ENCODE measurements at regions of chr1 and their contacts with region 1.

Region 1: DNA sequence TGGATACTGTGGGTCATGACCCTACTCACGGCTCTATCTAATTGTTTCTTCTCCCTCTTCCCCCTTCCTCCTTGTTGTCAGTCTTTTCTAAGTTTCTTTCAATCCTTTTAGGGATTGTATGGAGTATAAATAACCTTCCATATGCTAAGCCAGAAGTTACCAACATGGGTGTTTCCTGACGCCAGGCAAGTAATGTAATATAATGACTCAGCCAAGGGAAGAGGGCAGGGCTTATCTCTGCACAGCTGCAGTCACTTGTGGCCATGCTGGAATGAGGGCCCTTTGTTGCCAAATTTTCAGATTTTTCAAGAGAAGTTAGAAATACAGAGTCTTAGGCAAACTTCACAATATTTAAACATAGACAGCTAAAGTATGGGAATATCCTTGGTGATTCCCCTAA is 194.6 kb downstream of the ST6GALNAC3 start:
- DNase-seq: peak in 2 of 14 experiments; percentile 40 to 44
- ATAC-seq: peak; percentile 25
- H3K4me3 ChIP-seq: no peak overlapping the region
- H3K4me3 Mint-ChIP-seq: peak overlapping the region; percentile 50
- H3K27ac ChIP-seq: no peak overlapping the region
- H3K27ac Mint-ChIP-seq: peak overlapping the region; percentile 77
- H3K4me1 ChIP-seq: peaks cover 40% of the 10 kb centered on the region
- H3K4me1 Mint-ChIP-seq: peaks cover 70% of the 10 kb centered on the region
- H3K27me3 ChIP-seq: no peaks in the 10 kb centered on the region
- H3K27me3 Mint-ChIP-seq: no peaks in the 10 kb centered on the region
- CTCF ChIP-seq: no peak

Region 2: DNA sequence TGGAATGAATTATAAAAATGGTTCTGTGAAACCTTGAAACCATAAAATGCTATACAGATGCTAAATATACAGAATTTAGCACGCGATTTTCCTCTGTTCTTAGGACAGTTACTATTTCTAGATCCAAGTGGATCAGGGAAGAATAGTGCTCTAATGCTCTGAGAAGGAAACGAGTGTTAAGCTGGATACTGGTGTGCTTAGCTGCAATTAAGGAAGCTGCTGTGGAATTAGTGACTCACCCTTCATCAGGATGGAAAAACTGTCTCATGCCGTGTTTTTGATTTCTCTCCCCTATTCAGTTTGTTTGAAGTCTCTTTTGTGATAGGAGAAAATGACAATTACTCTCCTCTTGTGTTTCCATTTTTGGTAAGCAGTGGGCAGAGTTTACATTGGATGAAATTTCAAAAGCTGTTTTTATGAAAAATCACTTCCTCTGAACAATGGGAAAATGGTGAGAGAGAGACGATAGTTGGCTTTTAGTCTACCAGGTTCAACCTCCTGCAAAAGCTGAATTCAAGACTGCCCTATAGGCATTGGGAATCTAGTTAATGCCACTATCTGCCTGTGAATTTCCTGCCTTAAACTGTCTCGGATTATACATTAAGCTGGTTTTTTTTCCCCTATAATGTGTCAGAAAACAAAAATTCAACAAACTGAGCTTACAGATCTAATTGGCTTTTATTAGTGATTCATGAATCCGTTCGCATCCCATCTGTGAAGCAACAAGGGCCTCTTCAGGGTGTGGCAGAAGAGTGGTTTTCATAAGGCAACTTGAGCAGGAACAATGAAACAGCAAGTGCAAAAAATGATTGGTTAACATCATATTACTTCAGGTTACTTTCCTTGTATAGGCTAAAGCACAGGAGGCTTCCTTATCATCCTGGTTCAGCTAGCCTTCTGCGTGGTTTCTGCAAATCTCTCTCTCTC is 14.8 kb before region 1 on chr1:
- CTCF ChIA-PET with region 1: no interaction called
- POLR2A ChIA-PET with region 1: interaction called, 10 read pairs
- intact Hi-C with region 1: no loop called
- DNase-seq: no peak
- ATAC-seq: no peak
- H3K4me3 ChIP-seq: no peak overlapping the region
- H3K4me3 Mint-ChIP-seq: no peak overlapping the region
- H3K27ac ChIP-seq: no peak overlapping the region
- H3K27ac Mint-ChIP-seq: no peak overlapping the region
- H3K4me1 ChIP-seq: no peaks in the 10 kb centered on the region
- H3K4me1 Mint-ChIP-seq: peaks cover 55% of the 10 kb centered on the region
- H3K27me3 ChIP-seq: no peaks in the 10 kb centered on the region
- H3K27me3 Mint-ChIP-seq: no peaks in the 10 kb centered on the region
- CTCF ChIP-seq: no peak

Region 3: GRCh38 chr1:76281306-76281705 is 12.2 kb after region 1 on chr1:
- CTCF ChIA-PET with region 1: no interaction called
- POLR2A ChIA-PET with region 1: interaction called, 3 read pairs
- intact Hi-C with region 1: loop called in 1 of 2 experiments (anchors 2 kb)
- DNase-seq: no peak
- ATAC-seq: no peak
- H3K4me3 ChIP-seq: no peak overlapping the region
- H3K4me3 Mint-ChIP-seq: no peak overlapping the region
- H3K27ac ChIP-seq: no peak overlapping the region
- H3K27ac Mint-ChIP-seq: no peak overlapping the region
- H3K4me1 ChIP-seq: peaks cover 16% of the 10 kb centered on the region
- H3K4me1 Mint-ChIP-seq: peaks cover 29% of the 10 kb centered on the region
- H3K27me3 ChIP-seq: no peaks in the 10 kb centered on the region
- H3K27me3 Mint-ChIP-seq: no peaks in the 10 kb centered on the region
- CTCF ChIP-seq: no peak

Region 4: DNA sequence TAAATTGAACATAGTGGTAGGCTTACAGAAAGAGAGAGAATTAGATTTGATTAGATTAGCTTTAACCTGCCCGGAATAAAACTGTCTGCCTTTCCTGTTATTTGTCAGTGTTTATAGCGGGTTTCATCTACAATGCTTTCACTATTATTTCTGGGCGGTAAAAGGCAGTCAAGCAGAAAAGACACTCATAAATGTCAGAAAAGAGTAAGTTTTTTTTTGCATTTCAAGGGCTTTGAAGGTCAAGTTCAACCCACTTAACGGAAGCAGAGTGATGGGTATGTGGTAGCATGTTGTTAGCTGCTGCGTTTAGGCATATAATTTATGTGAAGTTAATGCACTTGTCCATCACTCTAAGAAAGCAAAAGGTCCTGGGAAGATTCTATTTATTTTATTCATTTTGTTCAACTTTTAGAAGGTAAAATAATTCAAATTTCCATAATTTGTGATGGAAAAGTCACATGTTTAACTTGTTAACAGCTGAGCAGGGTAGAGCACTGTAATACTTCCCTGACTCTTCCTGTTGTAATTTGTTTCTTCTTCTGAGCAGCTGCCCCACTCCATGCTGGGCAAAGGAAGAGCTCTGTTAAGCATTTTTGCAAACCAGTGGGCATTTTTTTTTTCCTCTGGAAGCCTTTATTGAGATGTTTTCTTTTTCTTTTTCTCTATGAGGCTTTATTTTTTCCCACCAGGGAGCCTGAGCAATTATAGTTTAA is 25.5 kb after region 1 on chr1:
- CTCF ChIA-PET with region 1: no interaction called
- POLR2A ChIA-PET with region 1: interaction called, 16 read pairs
- intact Hi-C with region 1: no loop called
- DNase-seq: peak in 3 of 14 experiments; percentile 40 to 64 (median 45)
- ATAC-seq: peak; percentile 73
- H3K4me3 ChIP-seq: peak overlapping the region; percentile 29
- H3K4me3 Mint-ChIP-seq: peak overlapping the region; percentile 72
- H3K27ac ChIP-seq: peak overlapping the region in 1 of 2 donors; percentile 45
- H3K27ac Mint-ChIP-seq: peak overlapping the region; percentile 58
- H3K4me1 ChIP-seq: peaks cover 23% of the 10 kb centered on the region
- H3K4me1 Mint-ChIP-seq: peaks cover 81% of the 10 kb centered on the region
- H3K27me3 ChIP-seq: no peaks in the 10 kb centered on the region
- H3K27me3 Mint-ChIP-seq: no peaks in the 10 kb centered on the region
- CTCF ChIP-seq: no peak

Region 5: GRCh38 chr1:76302711-76303339 is 33.7 kb after region 1 on chr1:
- CTCF ChIA-PET with region 1: no interaction called
- POLR2A ChIA-PET with region 1: interaction called, 6 read pairs
- intact Hi-C with region 1: loop called in 1 of 2 experiments (anchors 5 kb)
- DNase-seq: no peak
- ATAC-seq: no peak
- H3K4me3 ChIP-seq: no peak overlapping the region
- H3K4me3 Mint-ChIP-seq: no peak overlapping the region
- H3K27ac ChIP-seq: no peak overlapping the region
- H3K27ac Mint-ChIP-seq: peak overlapping the region; percentile 12
- H3K4me1 ChIP-seq: peaks cover 4% of the 10 kb centered on the region
- H3K4me1 Mint-ChIP-seq: peaks cover 44% of the 10 kb centered on the region
- H3K27me3 ChIP-seq: no peaks in the 10 kb centered on the region
- H3K27me3 Mint-ChIP-seq: no peaks in the 10 kb centered on the region
- CTCF ChIP-seq: no peak